ENCODE measurements at regions of chr12 and their contacts with region 1.

Region 1: GRCh38 chr12:122051231-122051876 is 27.2 kb upstream of the MLXIP start:
- DNase-seq: no peak
- ATAC-seq: no peak
- H3K4me3 ChIP-seq: no peak overlapping the region
- H3K4me3 Mint-ChIP-seq: no peak overlapping the region
- H3K27ac ChIP-seq: no peak overlapping the region
- H3K27ac Mint-ChIP-seq: no peak overlapping the region
- H3K4me1 ChIP-seq: peaks cover 4% of the 10 kb centered on the region
- H3K4me1 Mint-ChIP-seq: peaks cover 7% of the 10 kb centered on the region
- H3K27me3 ChIP-seq: no peaks in the 10 kb centered on the region
- H3K27me3 Mint-ChIP-seq: no peaks in the 10 kb centered on the region
- CTCF ChIP-seq: no peak

Region 2: GRCh38 chr12:121773011-121773777 is 278.2 kb before region 1 on chr12:
- CTCF ChIA-PET with region 1: no interaction called
- POLR2A ChIA-PET with region 1: no interaction called
- intact Hi-C with region 1: no loop called
- DNase-seq: peak; percentile 63 to 88 (median 80)
- ATAC-seq: peak; percentile 90
- H3K4me3 ChIP-seq: no peak overlapping the region
- H3K4me3 Mint-ChIP-seq: no peak overlapping the region
- H3K27ac ChIP-seq: peak overlapping the region in 1 of 2 experiments; percentile 32
- H3K27ac Mint-ChIP-seq: peak overlapping the region; percentile 57
- H3K4me1 ChIP-seq: peaks cover 29% of the 10 kb centered on the region
- H3K4me1 Mint-ChIP-seq: peaks cover 16% of the 10 kb centered on the region
- H3K27me3 ChIP-seq: no peaks in the 10 kb centered on the region
- H3K27me3 Mint-ChIP-seq: no peaks in the 10 kb centered on the region
- CTCF ChIP-seq: peak; percentile 82

Region 3: DNA sequence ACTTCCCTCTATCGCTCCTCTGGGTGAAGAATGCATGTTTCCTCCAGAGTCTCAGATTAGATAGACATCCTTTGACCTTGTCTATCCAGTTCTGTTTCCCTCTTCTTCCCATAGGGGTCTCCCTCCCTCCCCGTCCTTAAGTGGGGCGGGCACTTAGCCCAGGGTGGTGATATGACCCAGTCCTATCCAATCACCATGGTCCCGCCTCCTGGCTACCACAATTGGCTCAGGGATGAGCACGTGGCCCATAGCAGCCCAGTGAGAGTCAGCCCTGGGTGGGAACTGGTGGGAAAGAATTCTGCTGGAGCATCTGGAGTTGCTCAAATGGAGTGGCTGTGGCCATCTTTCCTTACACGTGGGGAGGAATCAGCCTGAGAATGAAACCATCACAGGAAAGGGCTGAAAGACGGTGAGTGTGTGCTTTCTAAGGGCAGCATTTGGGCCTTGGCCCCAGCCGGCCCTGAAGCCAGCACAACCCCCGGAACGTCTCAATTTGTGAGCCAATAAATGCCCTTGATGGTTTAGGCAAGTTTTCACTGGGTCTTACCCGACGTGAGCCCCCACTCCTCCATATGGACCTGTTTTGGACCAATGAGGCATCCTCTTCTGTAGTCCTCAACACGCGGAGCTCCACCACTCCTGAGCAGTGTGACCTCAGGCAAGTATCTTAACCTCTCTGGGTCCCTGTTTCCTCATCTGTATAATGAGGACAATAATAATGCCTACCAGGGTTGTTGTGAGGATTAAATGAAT is 12.8 kb after region 1 on chr12:
- CTCF ChIA-PET with region 1: interaction called, 15 read pairs
- POLR2A ChIA-PET with region 1: interaction called, 4 read pairs
- intact Hi-C with region 1: no loop called
- DNase-seq: peak in 5 of 9 experiments; percentile 21 to 61 (median 44)
- ATAC-seq: peak; percentile 84
- H3K4me3 ChIP-seq: no peak overlapping the region
- H3K4me3 Mint-ChIP-seq: no peak overlapping the region
- H3K27ac ChIP-seq: no peak overlapping the region
- H3K27ac Mint-ChIP-seq: no peak overlapping the region
- H3K4me1 ChIP-seq: peaks cover 16% of the 10 kb centered on the region
- H3K4me1 Mint-ChIP-seq: peaks cover 28% of the 10 kb centered on the region
- H3K27me3 ChIP-seq: no peaks in the 10 kb centered on the region
- H3K27me3 Mint-ChIP-seq: no peaks in the 10 kb centered on the region
- CTCF ChIP-seq: no peak

Region 4: GRCh38 chr12:122090759-122091515 is 39.6 kb after region 1 on chr12:
- CTCF ChIA-PET with region 1: interaction called, 14 read pairs
- POLR2A ChIA-PET with region 1: interaction called, 3 read pairs
- intact Hi-C with region 1: no loop called
- DNase-seq: no peak
- ATAC-seq: no peak
- H3K4me3 ChIP-seq: no peak overlapping the region
- H3K4me3 Mint-ChIP-seq: peak overlapping the region; percentile 65
- H3K27ac ChIP-seq: no peak overlapping the region
- H3K27ac Mint-ChIP-seq: no peak overlapping the region
- H3K4me1 ChIP-seq: peaks cover 93% of the 10 kb centered on the region
- H3K4me1 Mint-ChIP-seq: peaks cover 42% of the 10 kb centered on the region
- H3K27me3 ChIP-seq: no peaks in the 10 kb centered on the region
- H3K27me3 Mint-ChIP-seq: no peaks in the 10 kb centered on the region
- CTCF ChIP-seq: no peak

Region 5: DNA sequence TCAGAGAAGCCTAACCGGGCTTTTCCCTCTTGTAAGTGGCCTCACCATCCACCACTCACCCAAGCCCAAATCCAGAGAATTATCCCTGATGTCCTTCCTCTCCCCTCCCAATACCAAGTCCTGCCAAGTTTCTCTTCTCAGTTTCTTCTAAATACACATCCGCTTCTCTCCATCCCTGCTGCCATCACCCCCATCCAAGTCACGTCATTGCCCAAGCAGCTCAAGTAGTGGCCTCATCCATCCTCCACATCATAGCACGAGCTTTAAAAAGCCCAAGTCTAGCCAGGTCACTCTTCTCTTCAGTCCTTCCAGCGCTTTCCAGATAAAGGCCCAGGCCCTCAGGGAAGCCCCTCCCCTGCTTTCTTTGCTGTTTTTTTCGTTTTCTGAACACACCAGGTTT is 97.3 kb after region 1 on chr12:
- CTCF ChIA-PET with region 1: interaction called, 15 read pairs
- POLR2A ChIA-PET with region 1: no interaction called
- intact Hi-C with region 1: no loop called
- DNase-seq: no peak
- ATAC-seq: no peak
- H3K4me3 ChIP-seq: no peak overlapping the region
- H3K4me3 Mint-ChIP-seq: no peak overlapping the region
- H3K27ac ChIP-seq: no peak overlapping the region
- H3K27ac Mint-ChIP-seq: peak overlapping the region; percentile 57
- H3K4me1 ChIP-seq: no peaks in the 10 kb centered on the region
- H3K4me1 Mint-ChIP-seq: no peaks in the 10 kb centered on the region
- H3K27me3 ChIP-seq: no peaks in the 10 kb centered on the region
- H3K27me3 Mint-ChIP-seq: no peaks in the 10 kb centered on the region
- CTCF ChIP-seq: no peak

Region 6: DNA sequence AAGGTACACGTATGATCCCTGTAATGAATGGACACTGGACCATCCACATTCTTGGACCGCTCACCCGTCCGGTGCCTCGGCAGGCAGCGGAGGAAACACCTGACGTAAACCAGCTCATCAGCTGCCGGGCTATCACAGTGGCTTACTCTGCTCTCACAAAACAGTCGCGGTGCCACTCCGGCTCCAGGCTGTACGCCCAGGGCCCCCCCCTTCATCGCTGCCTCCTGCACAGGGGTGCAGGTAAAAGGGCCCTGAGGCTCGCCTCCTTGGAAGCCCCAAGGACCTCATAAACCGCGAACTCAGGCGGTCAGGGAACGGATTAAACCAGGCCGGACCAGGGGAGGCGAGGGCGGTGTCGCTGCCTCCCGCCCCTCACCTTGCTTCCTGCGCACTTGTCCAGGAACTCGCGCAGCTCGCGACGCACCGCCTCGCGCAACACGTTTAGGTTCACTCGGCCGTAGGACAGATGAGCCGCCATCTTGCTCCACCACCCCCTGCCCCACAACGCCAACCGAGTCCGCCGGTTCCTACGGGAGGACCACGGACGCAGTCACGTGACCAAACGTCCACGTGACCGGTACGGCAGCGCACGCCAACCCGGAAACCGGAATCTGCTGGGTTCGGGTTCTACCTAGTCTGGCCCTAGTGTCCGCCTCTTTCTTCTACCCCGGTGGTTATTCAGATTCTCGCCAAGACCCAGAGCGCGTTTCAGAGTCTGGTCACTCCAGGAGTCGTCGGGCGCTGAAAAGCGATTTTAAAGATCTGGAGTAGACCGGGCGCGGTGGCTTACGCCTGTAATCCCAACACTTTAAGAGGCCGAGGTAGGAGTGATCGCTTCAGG is 214.8 kb after region 1 on chr12 and contains the start of gene VPS33A:
- CTCF ChIA-PET with region 1: no interaction called
- POLR2A ChIA-PET with region 1: no interaction called
- intact Hi-C with region 1: loop called in 1 of 2 experiments (anchors 5 kb)
- DNase-seq: peak; percentile 82 to 97 (median 92)
- ATAC-seq: peak; percentile 72
- H3K4me3 ChIP-seq: peak within 1 kb of the TSS; percentile 89 to 95
- H3K4me3 Mint-ChIP-seq: peak within 1 kb of the TSS; percentile 97
- H3K27ac ChIP-seq: peak within 1 kb of the TSS; percentile 95 to 96
- H3K27ac Mint-ChIP-seq: peak within 1 kb of the TSS; percentile 100
- H3K4me1 ChIP-seq: peaks cover 9% of the 10 kb centered on the region
- H3K4me1 Mint-ChIP-seq: peaks cover 36% of the 10 kb centered on the region
- H3K27me3 ChIP-seq: no peaks in the 10 kb centered on the region
- H3K27me3 Mint-ChIP-seq: no peaks in the 10 kb centered on the region
- CTCF ChIP-seq: no peak
- total RNA-seq, gene VPS33A: 11.6 to 13.1 TPM

Measured in CD8-positive, alpha-beta T cell (primary cell).